ENCODE measurements at regions of chr12 and their contacts with region 1.

Region 1: GRCh38 chr12:9114946-9115345 is 773 bp downstream of the A2M start:
- DNase-seq: no peak
- H3K4me3 ChIP-seq: peak overlapping the region; percentile 6 to 65 (median 40)
- H3K27ac ChIP-seq: peak overlapping the region in 7 of 8 donors; percentile 59 to 84 (median 77)
- H3K4me1 ChIP-seq: peaks cover 8 to 50% (median 32%) of the 10 kb centered on the region in 6 donors
- H3K27me3 ChIP-seq: no peaks in the 10 kb centered on the region
- CTCF ChIP-seq: no peak
- POLR2A ChIP-seq: no peak

Region 2: GRCh38 chr12:9244894-9245293 is 129.9 kb after region 1 on chr12:
- intact Hi-C with region 1: loop called (anchors 5 kb)
- DNase-seq: no peak
- H3K4me3 ChIP-seq: no peak overlapping the region
- H3K27ac ChIP-seq: peak overlapping the region in 3 of 8 donors; percentile 0 to 36 (median 11)
- H3K4me1 ChIP-seq: peaks cover 0 to 16% (median 4%) of the 10 kb centered on the region in 6 donors
- H3K27me3 ChIP-seq: peaks cover 0 to 3% (median 0%) of the 10 kb centered on the region in 7 donors
- CTCF ChIP-seq: no peak
- POLR2A ChIP-seq: no peak